ENCODE measurements at regions of chr5 and their contacts with region 1.

Region 1: DNA sequence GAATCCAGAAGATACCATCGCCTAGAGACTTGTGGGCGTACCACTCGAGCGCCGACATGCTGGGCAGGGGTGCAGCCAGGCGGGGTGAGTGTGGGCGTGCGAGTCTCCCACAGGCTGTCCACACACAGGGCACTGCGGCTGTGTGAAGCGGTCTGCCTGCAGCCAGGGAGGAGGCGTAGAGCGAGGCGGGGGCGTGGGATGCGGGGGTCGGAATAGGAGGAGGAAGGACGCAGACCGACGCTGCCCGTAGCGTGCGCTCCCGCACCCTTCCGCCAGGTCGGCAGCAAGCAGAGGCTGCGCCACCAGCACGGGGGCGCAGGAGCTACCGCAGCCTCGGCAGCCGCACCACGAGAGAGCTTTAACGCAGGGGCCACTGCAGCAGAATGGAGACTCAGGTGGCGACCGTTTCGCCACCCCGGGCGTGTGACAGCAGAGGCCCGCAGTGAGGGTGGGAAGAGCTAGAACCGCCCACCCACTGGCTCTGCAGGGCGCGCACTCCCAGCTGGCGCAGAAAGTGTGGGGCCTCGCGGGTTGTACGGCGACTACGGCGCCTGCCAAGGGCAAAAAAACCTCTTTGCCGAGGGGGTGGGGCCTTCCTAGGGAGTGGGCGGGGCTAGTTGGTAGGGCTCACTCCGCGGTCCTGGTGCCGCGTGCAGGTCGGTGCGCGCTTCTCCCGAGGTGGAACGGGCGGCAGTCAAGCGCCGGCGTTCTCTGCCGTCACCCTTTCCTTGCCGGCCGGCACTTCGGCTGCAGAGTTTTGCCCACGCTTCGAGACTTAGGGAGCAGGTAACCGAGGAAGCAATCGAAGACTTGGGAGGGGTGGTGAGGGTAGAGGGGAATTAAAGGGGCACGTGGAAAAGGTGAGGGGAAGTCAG is at the starts of genes MBLAC2 and POLR3G:
- DNase-seq: peak; percentile 84 to 93
- H3K4me3 ChIP-seq: peak within 1 kb of the TSS; percentile 77 to 84
- H3K27ac ChIP-seq: peak within 1 kb of the TSS; percentile 68 to 73
- H3K4me1 ChIP-seq: peaks cover 0 to 17% (median 13%) of the 10 kb centered on the region in 4 donors
- H3K27me3 ChIP-seq: no peaks in the 10 kb centered on the region
- CTCF ChIP-seq: peak; percentile 34 to 42

Region 2: DNA sequence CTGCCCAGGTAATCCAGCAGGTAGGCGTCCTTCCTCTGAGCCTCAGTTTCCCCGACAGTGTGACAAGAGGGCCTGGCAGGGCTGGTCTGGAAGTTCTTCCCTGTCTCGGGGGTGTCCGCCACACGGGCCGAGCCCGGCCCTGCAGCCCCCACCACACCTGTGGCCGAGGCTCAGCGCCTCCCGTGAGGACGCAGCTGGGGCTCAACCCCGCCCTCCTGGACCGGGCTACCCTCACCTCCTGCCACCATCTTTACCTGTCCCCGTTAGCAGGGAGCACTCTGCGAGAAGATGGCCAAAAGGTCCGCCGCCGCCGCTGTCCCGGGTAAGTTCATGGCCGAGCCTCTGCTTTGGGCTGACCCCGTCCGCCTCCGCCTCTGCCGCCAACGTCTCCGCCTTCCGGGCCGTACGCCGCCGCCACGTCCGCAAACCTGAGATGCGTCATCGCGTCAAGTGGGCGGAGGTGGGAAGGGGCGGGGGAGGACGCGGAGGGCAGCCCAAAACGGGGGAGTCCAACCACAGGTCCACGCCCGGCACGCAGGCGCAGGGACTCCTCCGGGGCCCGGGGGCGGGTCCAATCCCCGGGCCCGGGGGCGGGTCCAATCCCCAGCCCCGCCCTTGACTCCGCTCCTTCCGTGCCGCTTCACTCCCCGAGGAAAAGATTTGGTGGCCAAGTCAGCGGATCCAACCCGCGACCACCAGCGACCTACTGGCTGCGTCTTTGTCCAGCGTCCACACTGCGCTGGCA is 54.9 kb after region 1 on chr5 and contains the start of gene LYSMD3:
- intact Hi-C with region 1: loop called (anchors 5 kb)
- DNase-seq: peak; percentile 96 to 99
- H3K4me3 ChIP-seq: peak within 1 kb of the TSS; percentile 64 to 95
- H3K27ac ChIP-seq: peak within 1 kb of the TSS; percentile 84 to 98
- H3K4me1 ChIP-seq: peaks cover 0 to 34% (median 18%) of the 10 kb centered on the region in 4 donors
- H3K27me3 ChIP-seq: no peaks in the 10 kb centered on the region
- CTCF ChIP-seq: no peak